WTC11 (cell line): ENCODE measurements at regions of chr11 and their contacts with region 1.

Region 1: DNA sequence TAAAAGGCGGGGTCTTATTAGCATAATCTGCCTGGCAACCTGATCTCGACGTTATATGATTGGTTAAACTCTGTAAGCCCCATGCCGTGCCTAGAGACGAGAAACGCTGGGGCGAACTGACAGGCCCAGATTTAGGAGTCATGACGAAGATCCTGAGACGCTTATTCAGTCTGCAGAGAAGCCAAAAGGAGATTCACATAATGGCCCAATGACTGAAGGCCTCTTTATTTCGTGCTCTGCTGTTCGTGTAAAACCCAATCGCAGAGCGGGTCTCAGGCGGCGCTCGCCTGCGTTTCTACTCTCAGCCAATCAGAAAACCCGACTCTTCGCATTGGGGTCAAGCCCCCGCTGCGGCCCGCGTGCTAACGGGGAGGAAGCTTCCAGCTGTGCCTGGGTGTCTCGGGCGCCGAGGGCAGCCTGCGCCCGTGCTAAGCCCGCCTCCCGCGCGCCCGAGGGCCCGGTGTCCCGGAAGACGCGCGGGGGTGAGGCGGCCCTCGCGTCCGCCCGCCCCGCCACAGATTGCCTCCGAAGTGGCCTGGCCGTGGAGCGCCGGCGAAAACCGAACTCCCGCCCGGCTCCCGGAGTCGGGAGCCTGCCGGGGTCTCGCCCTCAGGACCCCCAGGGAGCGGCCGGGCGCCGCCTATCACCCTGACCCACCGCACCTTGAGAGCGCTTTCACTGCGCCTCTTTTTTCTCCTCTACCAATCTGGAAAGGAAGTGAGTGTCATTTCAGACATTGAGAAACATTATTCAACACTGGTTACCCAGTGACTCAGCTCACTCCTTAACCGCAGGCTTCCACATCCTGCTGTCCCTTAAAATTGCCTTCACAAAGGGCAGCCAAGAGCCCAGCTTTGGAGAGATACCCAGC is 446 bp upstream of the PRDM10 start:
- DNase-seq: peak; percentile 84
- ATAC-seq: peak; percentile 84
- H3K4me3 Mint-ChIP-seq: peak overlapping the region; percentile 93
- H3K27ac Mint-ChIP-seq: peak overlapping the region; percentile 100
- H3K4me1 Mint-ChIP-seq: peaks cover 32% of the 10 kb centered on the region
- H3K27me3 Mint-ChIP-seq: no peaks in the 10 kb centered on the region
- CTCF ChIP-seq: no peak

Region 2: DNA sequence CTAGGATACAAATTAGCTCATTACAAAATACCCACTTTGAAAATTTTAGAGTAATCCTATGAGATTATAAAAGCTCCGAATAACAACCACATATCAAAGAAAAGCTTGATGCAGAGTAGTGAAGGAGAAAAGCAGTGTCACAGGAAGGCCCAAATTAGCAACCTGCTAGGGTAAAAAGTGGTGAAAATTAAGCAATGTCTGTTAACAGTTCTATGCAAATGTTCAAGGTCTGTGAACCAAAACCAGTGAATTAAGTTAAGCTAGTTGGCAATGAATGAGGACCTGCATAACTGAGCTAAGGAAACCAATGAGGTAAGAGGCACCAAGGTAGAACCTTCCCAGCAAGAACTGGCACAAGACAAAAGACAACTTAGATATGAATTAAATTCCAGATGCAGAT is 30.0 kb before region 1 on chr11:
- CTCF ChIA-PET with region 1: interaction called, 4 read pairs
- POLR2A ChIA-PET with region 1: interaction called, 16 read pairs
- DNase-seq: no peak
- ATAC-seq: no peak
- H3K4me3 Mint-ChIP-seq: peak overlapping the region; percentile 11; the same call in 1 of the 2 replicates
- H3K27ac Mint-ChIP-seq: peak overlapping the region; percentile 96
- H3K4me1 Mint-ChIP-seq: peaks cover 25% of the 10 kb centered on the region
- H3K27me3 Mint-ChIP-seq: no peaks in the 10 kb centered on the region
- CTCF ChIP-seq: no peak

Region 3: GRCh38 chr11:129992161-129992944 is 10.7 kb before region 1 on chr11:
- CTCF ChIA-PET with region 1: interaction called, 11 read pairs
- POLR2A ChIA-PET with region 1: interaction called, 11 read pairs
- DNase-seq: peak; percentile 66
- ATAC-seq: peak; percentile 89
- H3K4me3 Mint-ChIP-seq: no peak overlapping the region
- H3K27ac Mint-ChIP-seq: peak overlapping the region; percentile 63
- H3K4me1 Mint-ChIP-seq: peaks cover 19% of the 10 kb centered on the region
- H3K27me3 Mint-ChIP-seq: no peaks in the 10 kb centered on the region
- CTCF ChIP-seq: no peak